Caco-2 (cell line): ENCODE measurements at regions of chr10 and their contacts with region 1.

Region 1: GRCh38 chr10:105181626-105182025 is 540.5 kb downstream of the SORCS3 start:
- DNase-seq: peak; percentile 72 to 79
- H3K4me3 ChIP-seq: no peak overlapping the region
- H3K4me3 Mint-ChIP-seq: no peak overlapping the region
- H3K27ac Mint-ChIP-seq: peak overlapping the region; percentile 53
- H3K4me1 ChIP-seq: peaks cover 13% of the 10 kb centered on the region
- H3K4me1 Mint-ChIP-seq: peaks cover 15% of the 10 kb centered on the region
- H3K27me3 ChIP-seq: no peaks in the 10 kb centered on the region
- H3K27me3 Mint-ChIP-seq: no peaks in the 10 kb centered on the region
- CTCF ChIP-seq: no peak

Region 2: DNA sequence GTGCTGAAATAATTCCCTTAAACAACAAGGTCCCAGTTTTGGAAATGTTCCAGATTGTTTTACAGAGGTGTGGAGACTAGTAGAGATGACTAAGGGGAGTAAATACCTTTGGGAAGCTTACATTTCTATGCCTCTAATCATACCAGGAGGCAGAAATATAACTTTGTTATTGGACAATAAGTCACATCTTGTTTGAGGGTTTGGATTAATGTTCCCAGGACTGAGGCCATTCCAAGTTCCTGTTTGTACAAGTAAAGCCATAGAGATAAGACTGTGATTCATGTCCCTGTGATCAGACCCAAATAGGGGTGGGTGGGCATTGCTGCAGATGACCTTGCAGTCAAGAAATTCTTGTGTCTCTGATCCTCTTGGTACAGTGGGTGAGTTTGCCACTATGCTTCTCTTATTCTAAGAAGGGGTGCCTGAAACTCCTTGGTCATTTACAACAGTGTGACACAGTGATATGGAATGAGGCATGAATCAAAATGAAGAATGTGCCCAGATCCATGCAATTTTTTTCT is 32.2 kb before region 1 on chr10:
- CTCF ChIA-PET with region 1: no interaction called
- POLR2A ChIA-PET with region 1: no interaction called
- intact Hi-C with region 1: loop called (anchors 2 kb)
- DNase-seq: peak in 1 of 2 experiments; percentile 19
- H3K4me3 ChIP-seq: no peak overlapping the region
- H3K4me3 Mint-ChIP-seq: no peak overlapping the region
- H3K27ac Mint-ChIP-seq: no peak overlapping the region
- H3K4me1 ChIP-seq: peaks cover 33% of the 10 kb centered on the region
- H3K4me1 Mint-ChIP-seq: peaks cover 9% of the 10 kb centered on the region
- H3K27me3 ChIP-seq: no peaks in the 10 kb centered on the region
- H3K27me3 Mint-ChIP-seq: no peaks in the 10 kb centered on the region
- CTCF ChIP-seq: no peak

Region 3: DNA sequence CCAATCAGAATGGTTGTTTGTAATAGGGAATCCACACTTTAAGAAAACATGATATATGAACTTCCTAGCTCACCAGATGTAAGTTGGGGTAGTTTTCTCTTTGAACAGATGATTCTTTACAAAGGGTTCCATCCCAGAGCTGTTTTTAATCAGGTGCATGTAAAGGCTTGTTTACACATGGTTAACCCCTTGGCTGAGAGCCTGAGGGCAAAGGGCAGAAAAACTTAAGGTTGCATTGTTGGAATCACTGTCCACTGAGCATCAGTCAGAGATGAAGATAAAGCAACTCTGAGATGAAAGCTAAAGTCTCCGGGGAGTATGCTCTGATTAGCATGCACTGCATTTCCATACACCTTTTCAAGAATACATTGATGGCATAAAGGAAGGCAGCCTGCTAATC is 22.4 kb before region 1 on chr10:
- CTCF ChIA-PET with region 1: no interaction called
- POLR2A ChIA-PET with region 1: interaction called, 3 read pairs
- intact Hi-C with region 1: loop called (anchors 1 kb)
- DNase-seq: peak; percentile 43 to 64
- H3K4me3 ChIP-seq: no peak overlapping the region
- H3K4me3 Mint-ChIP-seq: no peak overlapping the region
- H3K27ac Mint-ChIP-seq: peak overlapping the region; percentile 45
- H3K4me1 ChIP-seq: peaks cover 30% of the 10 kb centered on the region
- H3K4me1 Mint-ChIP-seq: peaks cover 6% of the 10 kb centered on the region
- H3K27me3 ChIP-seq: no peaks in the 10 kb centered on the region
- H3K27me3 Mint-ChIP-seq: peaks cover 3% of the 10 kb centered on the region
- CTCF ChIP-seq: no peak

Region 4: DNA sequence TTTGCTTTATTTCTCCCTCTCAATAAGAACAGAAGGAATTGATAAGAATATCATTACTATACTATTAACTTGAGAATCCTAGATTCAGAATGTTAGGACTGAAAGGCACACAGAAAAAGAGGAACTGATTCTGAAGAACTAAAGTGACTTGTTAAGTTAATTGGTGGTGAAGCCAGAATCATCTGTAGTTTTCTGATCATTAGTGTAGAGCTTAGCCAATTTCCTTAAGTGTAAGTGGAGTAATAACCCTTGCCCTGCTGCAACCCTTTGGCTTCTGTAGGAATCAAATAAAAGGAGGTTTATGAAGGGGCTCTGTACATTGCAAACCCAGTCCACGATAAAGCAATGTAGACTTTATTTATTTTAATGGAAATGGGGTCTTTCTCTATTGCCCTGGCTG is 645.5 kb after region 1 on chr10:
- CTCF ChIA-PET with region 1: no interaction called
- POLR2A ChIA-PET with region 1: no interaction called
- intact Hi-C with region 1: no loop called
- DNase-seq: no peak
- H3K4me3 ChIP-seq: no peak overlapping the region
- H3K4me3 Mint-ChIP-seq: no peak overlapping the region
- H3K27ac Mint-ChIP-seq: no peak overlapping the region
- H3K4me1 ChIP-seq: no peaks in the 10 kb centered on the region
- H3K4me1 Mint-ChIP-seq: no peaks in the 10 kb centered on the region
- H3K27me3 ChIP-seq: no peaks in the 10 kb centered on the region
- H3K27me3 Mint-ChIP-seq: no peaks in the 10 kb centered on the region
- CTCF ChIP-seq: no peak